ENCODE measurements at regions of chr15 and their contacts with region 1.

Region 1: GRCh38 chr15:75453703-75454470 is 2.4 kb upstream of the SIN3A start:
- DNase-seq: peak; percentile 97
- H3K4me3 Mint-ChIP-seq: peak overlapping the region; percentile 87
- H3K27ac Mint-ChIP-seq: peak overlapping the region; percentile 100
- H3K4me1 Mint-ChIP-seq: peaks cover 28% of the 10 kb centered on the region
- H3K27me3 Mint-ChIP-seq: no peaks in the 10 kb centered on the region

Region 2: DNA sequence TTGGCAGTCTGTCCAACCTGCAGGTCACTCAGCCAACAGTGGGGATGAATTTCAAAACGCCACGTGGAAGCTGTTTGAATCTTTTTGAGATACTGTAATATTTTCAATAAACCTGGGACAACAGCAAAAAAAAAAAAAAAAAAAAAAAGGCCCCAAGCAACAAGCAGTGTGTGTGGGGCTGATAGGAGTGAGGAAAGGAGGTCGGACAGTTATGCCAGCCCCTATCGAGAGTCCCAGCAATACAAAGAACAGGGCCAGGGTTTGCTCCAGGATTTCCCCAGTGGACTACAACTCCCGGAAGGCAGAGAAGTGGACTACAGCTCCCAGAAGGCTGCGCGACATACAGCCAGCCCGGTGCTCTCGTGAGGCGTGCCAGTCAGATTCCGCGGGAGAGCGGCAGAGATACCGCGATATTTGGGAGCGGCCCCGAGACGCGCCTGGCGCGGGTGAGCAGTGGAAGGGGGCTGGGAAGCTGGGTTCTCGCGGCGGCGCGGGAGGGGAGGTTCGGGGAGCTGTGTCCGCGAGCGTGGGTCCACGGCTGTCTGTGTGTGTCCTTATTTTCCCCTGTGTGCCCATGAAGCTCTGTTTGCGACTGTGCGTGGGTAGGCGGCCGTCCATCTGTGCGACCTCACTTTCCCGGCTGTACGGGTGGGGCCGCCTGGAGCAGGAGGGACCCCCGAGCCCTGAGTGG is 430.6 kb before region 1 on chr15 and contains the start of gene PPCDC:
- CTCF ChIA-PET with region 1: no interaction called
- POLR2A ChIA-PET with region 1: interaction called, 11 read pairs
- DNase-seq: peak; percentile 97
- H3K4me3 Mint-ChIP-seq: peak within 1 kb of the TSS; percentile 97
- H3K27ac Mint-ChIP-seq: peak within 1 kb of the TSS; percentile 99
- H3K4me1 Mint-ChIP-seq: peaks cover 32% of the 10 kb centered on the region
- H3K27me3 Mint-ChIP-seq: no peaks in the 10 kb centered on the region
- total RNA-seq, gene PPCDC: 19.6 to 20.7 TPM

Region 3: DNA sequence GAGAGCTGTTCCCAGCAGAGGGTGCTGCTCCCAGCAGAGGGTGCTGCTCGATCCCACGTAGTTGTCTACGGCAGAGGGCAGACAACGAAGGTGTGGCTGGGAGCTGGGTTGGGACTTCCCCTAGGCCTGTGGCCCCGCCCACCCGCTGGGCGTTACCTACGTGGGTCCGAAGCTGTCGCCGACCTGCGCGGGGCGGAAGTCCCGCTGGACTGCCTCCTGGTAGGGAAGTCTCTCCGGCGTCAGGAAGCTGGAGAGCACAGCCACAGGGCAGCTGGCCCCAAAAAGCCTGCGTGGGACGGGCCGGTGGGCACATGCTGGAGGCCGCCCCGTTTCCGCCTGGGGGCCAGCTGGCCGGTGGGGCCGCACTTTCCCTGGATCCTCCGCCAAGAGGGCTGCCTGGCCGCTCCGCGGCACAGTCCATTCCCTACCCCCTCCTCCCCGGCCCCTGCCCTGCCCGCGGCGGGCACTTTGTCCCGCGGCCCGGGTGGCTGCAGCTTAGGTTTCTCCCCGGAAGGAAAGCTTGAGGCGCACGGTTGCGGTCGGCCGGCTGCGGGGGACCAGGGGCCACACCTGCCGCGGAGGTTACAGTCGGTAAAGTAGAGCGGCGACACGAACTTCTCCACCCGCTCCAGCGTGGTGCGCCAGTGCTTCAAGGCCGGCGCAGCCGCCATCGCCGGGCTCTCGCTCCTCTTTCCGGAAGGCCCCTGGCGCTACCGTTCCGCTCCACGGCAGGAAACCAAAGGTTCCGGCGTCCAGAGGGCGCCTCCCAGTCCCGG is 85.8 kb before region 1 on chr15 and contains the start of gene MAN2C1:
- CTCF ChIA-PET with region 1: interaction called, 21 read pairs
- POLR2A ChIA-PET with region 1: interaction called, 8 read pairs
- DNase-seq: peak; percentile 93
- H3K4me3 Mint-ChIP-seq: peak within 1 kb of the TSS; percentile 83
- H3K27ac Mint-ChIP-seq: peak within 1 kb of the TSS; percentile 95
- H3K4me1 Mint-ChIP-seq: peaks cover 29% of the 10 kb centered on the region
- H3K27me3 Mint-ChIP-seq: no peaks in the 10 kb centered on the region
- total RNA-seq, gene MAN2C1: 151 to 205 TPM

Region 4: DNA sequence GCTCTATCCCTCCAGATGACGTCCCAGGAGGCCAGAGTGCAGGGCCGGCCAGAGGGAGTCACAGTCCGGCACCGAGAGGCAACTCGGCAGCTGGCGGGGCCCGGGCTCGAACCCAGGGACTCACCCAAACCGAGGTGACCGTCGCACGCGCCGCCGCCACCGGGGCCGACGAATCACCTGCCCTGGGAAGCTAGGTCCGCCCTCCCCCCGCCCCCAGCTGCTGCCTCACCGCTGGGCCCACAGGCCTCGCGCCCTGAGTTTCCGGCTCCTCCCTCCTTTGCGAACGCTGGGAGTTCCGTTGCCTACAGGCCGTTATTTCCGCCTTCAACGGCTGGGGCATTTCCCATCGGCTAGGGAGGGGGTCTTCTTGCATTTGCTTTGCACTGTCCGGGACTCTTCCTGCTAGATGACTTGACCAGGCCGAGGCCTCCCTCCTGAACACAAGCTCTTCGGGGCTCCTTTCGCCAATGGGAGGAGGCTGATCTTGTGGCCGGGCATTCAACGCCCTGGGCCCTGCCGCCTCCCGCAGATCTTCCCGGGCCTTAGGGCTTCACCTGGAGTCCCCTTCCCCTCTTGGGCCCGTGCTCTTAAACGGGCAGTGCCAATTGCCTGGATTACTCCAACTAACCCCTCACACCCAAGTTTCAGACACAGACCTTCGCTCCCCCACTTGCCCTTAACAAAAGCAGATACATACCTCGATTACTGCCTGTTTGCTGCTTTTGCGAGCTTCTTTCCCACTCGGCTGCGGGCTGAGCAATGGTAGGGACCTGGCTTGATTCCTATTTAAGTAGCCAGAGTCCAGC is 171.9 kb after region 1 on chr15 and contains the start of gene SNUPN:
- CTCF ChIA-PET with region 1: interaction called, 3 read pairs
- POLR2A ChIA-PET with region 1: interaction called, 18 read pairs
- DNase-seq: peak; percentile 95
- H3K4me3 Mint-ChIP-seq: peak within 1 kb of the TSS; percentile 85
- H3K27ac Mint-ChIP-seq: peak within 1 kb of the TSS; percentile 96
- H3K4me1 Mint-ChIP-seq: peaks cover 46% of the 10 kb centered on the region
- H3K27me3 Mint-ChIP-seq: no peaks in the 10 kb centered on the region
- total RNA-seq, gene SNUPN: 41.9 to 44.1 TPM

Region 5: DNA sequence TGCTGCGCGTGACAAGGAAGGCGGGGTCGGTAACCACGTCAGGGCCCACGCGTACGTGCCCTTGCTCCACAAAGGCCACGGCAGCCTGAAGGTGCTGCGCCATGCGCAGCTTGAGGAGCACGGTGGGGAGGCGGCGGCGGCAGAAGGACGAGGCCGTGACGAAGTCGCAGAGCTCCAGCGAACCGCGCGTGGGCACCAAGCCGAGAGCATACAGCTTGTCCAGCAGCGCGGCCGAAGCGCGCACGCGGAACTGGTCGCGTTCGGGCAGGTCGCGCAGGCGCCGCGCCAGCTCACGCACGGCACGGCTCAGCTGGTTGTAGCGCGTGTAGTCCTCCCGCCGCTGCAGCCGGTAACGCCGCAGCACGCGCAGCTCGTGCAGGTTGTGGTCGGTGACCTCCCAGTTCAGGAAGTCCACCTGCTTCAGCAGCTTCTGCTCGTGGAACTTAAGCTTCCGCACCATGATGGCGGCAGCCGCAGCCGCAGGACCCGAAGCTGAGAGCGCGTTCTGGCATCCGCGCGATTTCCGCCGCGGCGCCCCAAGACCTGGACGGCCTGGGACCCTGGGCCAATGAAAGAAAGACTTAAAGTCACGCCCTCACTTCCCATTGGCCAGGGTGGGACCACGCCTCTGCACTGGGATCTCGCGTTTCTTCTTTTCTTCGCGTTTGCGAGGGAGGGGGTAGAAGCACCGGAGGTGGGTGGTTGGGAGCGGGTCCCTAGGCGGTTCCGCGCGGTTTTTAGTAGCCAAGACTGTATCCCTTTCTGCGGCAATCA is 186.0 kb after region 1 on chr15 and contains the start of gene IMP3:
- CTCF ChIA-PET with region 1: interaction called, 6 read pairs
- POLR2A ChIA-PET with region 1: interaction called, 17 read pairs
- DNase-seq: peak; percentile 97
- H3K4me3 Mint-ChIP-seq: peak within 1 kb of the TSS; percentile 86
- H3K27ac Mint-ChIP-seq: peak within 1 kb of the TSS; percentile 95
- H3K4me1 Mint-ChIP-seq: peaks cover 39% of the 10 kb centered on the region
- H3K27me3 Mint-ChIP-seq: peaks cover under 1% of the 10 kb centered on the region
- total RNA-seq, gene IMP3: 79.1 to 81.4 TPM

Measured in activated CD4-positive, alpha-beta T cell treated with anti-CD3 and anti-CD28 coated beads, Interleukin-2, amount 10 ng/mL, durations not matched to agents 7 days and 5 days (primary cell).